ENCODE measurements at regions of chr7 and their contacts with region 1.

Region 1: GRCh38 chr7:139340037-139340807 is 915 bp upstream of the FMC1 start:
- DNase-seq: peak; percentile 97
- H3K4me3 ChIP-seq: peak overlapping the region; percentile 91
- H3K27me3 ChIP-seq: no peaks in the 10 kb centered on the region
- CTCF ChIP-seq: peak; percentile 90

Region 2: DNA sequence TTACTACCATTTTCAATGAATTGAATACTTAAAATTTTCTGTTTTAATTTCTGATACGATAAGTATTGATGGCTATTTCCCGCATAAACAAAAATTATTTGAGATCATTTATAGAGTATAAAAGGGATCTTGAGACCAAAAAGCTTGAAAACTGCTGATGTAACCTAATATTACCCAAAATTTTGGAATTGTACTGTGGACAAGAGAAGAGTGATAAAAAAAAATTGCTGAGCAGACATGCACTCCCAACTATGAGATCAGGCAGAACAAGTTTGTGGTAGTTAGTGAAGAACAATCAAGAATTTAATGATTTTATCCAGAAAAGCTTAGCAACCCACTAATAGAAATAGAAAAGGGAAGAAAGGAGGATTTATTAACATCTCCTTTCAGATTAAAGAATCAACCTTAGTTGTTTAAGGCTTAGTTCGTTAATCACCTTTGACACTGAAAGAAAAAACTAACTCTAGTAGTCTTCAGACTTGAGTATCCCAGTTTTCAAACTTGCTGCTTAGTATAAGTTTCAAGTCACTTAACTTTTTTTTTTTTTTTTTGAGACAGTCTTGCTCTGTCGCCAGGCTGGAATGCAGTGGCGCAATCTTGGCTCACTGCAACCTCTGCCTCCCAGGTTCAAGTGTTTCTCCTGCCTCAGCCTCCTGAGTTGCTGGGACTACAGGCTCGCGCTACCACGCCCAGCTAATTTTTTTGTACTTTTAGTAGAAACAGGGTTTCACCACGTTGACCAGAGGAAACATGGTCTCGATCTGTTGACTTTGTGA is 180.1 kb before region 1 on chr7:
- CTCF ChIA-PET with region 1: no interaction called
- POLR2A ChIA-PET with region 1: no interaction called
- DNase-seq: no peak
- H3K4me3 ChIP-seq: no peak overlapping the region
- H3K27me3 ChIP-seq: no peaks in the 10 kb centered on the region
- CTCF ChIP-seq: no peak

Region 3: DNA sequence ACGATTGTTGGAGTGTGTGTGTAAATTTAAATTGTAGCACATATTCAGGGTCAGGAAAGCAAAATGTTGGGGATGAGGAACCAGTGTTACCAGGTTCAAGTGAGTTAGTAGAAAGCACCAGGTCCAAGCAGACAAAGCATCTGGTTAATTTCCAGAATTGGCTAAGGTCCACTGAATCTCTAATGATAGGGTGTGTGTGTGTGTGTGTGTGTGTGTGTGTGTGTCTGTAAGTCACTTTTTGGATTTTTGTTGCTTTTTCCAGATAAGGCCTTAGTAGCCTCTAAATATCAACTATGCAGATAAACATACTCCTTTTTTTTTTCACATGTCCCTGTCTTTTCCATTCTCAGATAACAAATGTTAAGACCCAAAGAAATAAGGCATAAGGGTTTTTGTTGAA is 35.7 kb before region 1 on chr7:
- CTCF ChIA-PET with region 1: no interaction called
- POLR2A ChIA-PET with region 1: interaction called, 16 read pairs
- DNase-seq: no peak
- H3K4me3 ChIP-seq: no peak overlapping the region
- H3K27me3 ChIP-seq: no peaks in the 10 kb centered on the region
- CTCF ChIP-seq: no peak

Region 4: GRCh38 chr7:139914306-139915267 is 574.4 kb after region 1 on chr7:
- CTCF ChIA-PET with region 1: no interaction called
- POLR2A ChIA-PET with region 1: interaction called, 25 read pairs
- DNase-seq: no peak
- H3K4me3 ChIP-seq: no peak overlapping the region
- H3K27me3 ChIP-seq: peaks cover 1% of the 10 kb centered on the region; the same call in 1 of the 2 replicates
- CTCF ChIP-seq: no peak

Measured in BJ (cell line).